H1 (cell line): ENCODE measurements at regions of chr2 and their contacts with region 1.

Region 1: GRCh38 chr2:100262555-100263320 is 59.6 kb downstream of the LONRF2 start:
- DNase-seq: peak in 1 of 2 experiments; percentile 89
- H3K4me3 ChIP-seq: peak overlapping the region in 3 of 4 experiments; percentile 4 to 45 (median 15); a peak in 3 of 8 replicates
- H3K27ac ChIP-seq: no peak overlapping the region
- H3K4me1 ChIP-seq: no peaks in the 10 kb centered on the region; a peak in 1 of 7 replicates
- H3K27me3 ChIP-seq: no peaks in the 10 kb centered on the region
- CTCF ChIP-seq: peak; percentile 86 to 91 (median 89)
- EP300 ChIP-seq: no peak
- POLR2A ChIP-seq: no peak
- RAD21 ChIP-seq: peak; percentile 89 to 91

Region 2: DNA sequence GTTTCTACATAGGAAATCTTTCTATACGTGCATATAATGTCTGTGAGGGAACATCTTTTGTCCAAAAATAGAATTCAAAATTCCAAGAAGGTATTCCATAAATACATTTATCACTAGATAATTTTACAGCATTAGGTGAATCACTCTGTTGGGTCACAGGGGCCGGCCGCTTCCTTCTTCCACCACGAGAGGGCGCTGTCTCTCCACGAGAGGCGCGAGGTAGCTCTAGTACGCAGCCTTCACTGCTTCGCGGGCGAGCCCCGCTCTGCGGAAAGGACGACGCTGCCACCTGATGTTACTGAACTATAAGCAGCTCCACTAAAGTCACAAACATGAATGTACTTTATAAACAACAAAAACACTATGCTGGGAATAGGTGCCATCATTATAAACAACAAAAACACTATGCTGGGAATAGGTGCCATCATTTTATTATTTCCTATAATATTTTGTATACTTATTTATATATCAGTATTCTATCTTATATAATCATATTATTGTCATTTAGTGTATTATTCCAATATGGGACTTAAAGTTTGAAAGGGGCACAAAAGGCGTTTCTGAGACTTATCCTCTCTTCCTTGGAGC is 703.6 kb before region 1 on chr2:
- CTCF ChIA-PET with region 1: interaction called, 29 read pairs
- POLR2A ChIA-PET with region 1: no interaction called
- DNase-seq: peak in 1 of 2 experiments; percentile 97
- H3K4me3 ChIP-seq: no peak overlapping the region
- H3K27ac ChIP-seq: no peak overlapping the region
- H3K4me1 ChIP-seq: peaks cover 2 to 9% (median 7%) of the 10 kb centered on the region in 4 experiments; a peak in 5 of 7 replicates
- H3K27me3 ChIP-seq: no peaks in the 10 kb centered on the region
- CTCF ChIP-seq: peak; percentile 87 to 95 (median 87)
- EP300 ChIP-seq: no peak
- POLR2A ChIP-seq: no peak
- RAD21 ChIP-seq: peak; percentile 99

Region 3: GRCh38 chr2:100242891-100243619 is 19.7 kb before region 1 on chr2:
- CTCF ChIA-PET with region 1: interaction called, 178 read pairs
- POLR2A ChIA-PET with region 1: no interaction called
- DNase-seq: peak in 1 of 2 experiments; percentile 86
- H3K4me3 ChIP-seq: no peak overlapping the region
- H3K27ac ChIP-seq: no peak overlapping the region
- H3K4me1 ChIP-seq: peaks cover 0 to 6% (median 2%) of the 10 kb centered on the region in 4 experiments; a peak in 4 of 7 replicates
- H3K27me3 ChIP-seq: peaks cover 0 to 2% (median under 1%) of the 10 kb centered on the region in 4 experiments; a peak in 2 of 7 replicates
- CTCF ChIP-seq: peak; percentile 92 to 95 (median 93)
- EP300 ChIP-seq: no peak
- POLR2A ChIP-seq: no peak
- RAD21 ChIP-seq: peak; percentile 97

Region 4: DNA sequence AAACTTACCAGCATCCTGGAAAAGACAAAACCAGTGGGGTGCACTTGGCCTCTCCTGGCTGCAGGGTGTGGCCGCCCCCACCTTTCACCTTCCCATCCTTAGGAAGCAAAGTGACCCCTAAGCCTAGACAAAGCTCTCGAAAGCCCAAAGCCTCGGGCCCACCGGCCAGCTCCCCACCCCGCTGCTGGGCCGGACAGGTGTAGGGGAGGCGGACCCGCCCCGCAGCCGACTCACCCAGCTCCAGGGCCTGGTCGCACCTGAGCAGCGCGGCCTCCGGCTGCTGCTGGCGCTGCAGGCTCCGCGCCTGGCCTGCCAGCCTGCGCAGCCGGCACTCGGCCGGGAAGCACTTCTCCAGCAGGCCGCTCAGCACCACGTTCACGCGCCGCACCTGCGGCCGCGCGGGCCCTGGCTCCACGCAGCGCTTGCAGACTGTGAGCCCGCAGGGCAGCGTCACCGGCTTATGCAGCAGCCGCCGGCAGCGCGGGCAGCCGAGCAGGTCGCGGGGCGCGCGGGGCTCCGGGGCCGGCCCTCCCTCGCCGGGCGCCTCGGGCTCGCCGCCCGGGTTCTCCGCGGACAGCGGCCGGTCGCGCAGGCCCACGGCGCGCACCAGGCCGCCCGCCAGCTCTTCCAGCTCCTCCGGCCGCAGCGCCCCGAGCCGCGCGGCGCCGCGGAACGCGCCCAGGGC is 58.6 kb after region 1 on chr2:
- CTCF ChIA-PET with region 1: interaction called, 43 read pairs
- POLR2A ChIA-PET with region 1: no interaction called
- DNase-seq: peak in 1 of 2 experiments; percentile 78
- H3K4me3 ChIP-seq: peak overlapping the region; percentile 33 to 66 (median 48)
- H3K27ac ChIP-seq: no peak overlapping the region
- H3K4me1 ChIP-seq: peaks cover 0 to 3% (median 0%) of the 10 kb centered on the region in 4 experiments; a peak in 2 of 7 replicates
- H3K27me3 ChIP-seq: peaks cover 14 to 46% (median 33%) of the 10 kb centered on the region in 4 experiments
- CTCF ChIP-seq: peak; percentile 31 to 57 (median 53); a peak in 3 of 4 replicates
- EP300 ChIP-seq: no peak
- POLR2A ChIP-seq: no peak
- RAD21 ChIP-seq: peak; percentile 17 to 36; a peak in 2 of 4 replicates

Region 5: DNA sequence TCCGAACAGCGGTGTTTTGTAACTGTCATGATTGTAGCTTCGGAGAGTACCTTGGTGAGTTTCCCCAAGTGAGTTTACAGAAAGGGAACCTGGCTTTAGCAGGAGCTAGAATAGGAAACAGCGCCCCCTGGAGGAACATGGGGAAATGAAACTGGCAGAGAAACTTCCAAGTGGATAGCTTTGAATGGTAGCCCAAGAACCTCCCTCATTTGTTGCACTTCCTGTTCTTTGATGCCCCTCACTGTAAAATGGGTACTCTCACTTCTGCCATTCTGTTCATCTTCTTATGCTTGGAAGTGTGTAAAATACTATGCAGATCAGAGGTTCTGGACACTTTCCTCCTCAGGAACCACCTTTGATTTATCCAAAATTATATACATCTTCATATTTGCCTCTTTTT is 118.5 kb after region 1 on chr2:
- CTCF ChIA-PET with region 1: interaction called, 139 read pairs
- POLR2A ChIA-PET with region 1: interaction called, 3 read pairs
- DNase-seq: peak; percentile 67 to 97
- H3K4me3 ChIP-seq: no peak overlapping the region
- H3K27ac ChIP-seq: no peak overlapping the region
- H3K4me1 ChIP-seq: no peaks in the 10 kb centered on the region
- H3K27me3 ChIP-seq: no peaks in the 10 kb centered on the region
- CTCF ChIP-seq: peak; percentile 28 to 90 (median 87)
- EP300 ChIP-seq: no peak
- POLR2A ChIP-seq: no peak
- RAD21 ChIP-seq: peak; percentile 81 to 87

Region 6: DNA sequence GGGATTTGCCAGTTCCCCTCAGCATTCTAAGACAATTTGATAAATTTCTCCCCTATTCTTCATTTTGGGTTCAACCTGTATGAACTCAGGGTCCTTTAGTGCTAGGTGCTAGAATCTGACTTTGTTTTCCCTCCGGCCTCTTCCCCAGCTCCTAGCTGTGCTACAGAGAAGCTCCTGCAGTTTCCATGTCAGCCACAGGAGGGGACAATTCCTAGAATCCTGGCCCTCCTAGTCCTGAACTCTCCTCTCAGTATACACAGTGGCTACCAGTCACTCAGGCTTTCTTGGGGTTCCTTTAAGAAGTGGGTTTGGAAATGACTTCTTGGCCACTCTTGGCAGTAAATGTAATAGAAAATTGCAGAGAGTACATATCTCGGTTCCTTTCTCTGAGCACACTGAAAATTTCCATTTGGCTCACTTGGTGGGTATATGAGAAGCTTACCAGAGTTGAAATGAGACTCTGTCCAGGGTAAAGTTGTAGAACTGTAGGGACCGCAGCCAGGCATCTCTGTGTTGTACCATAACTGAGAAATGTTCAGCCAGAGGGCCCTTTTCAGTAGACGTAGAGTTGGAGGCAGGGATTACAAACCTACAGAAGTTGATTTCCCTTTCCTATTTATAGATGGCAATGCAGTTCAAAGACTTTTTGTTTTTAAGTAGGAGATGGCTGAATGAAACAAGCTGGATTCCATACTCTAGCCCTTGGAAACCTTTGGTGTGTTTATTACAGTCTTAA is 159.8 kb after region 1 on chr2:
- CTCF ChIA-PET with region 1: interaction called, 18 read pairs
- POLR2A ChIA-PET with region 1: no interaction called
- DNase-seq: no peak
- H3K4me3 ChIP-seq: no peak overlapping the region
- H3K27ac ChIP-seq: no peak overlapping the region
- H3K4me1 ChIP-seq: peaks cover 0 to 4% (median 1%) of the 10 kb centered on the region in 4 experiments; a peak in 2 of 7 replicates
- H3K27me3 ChIP-seq: no peaks in the 10 kb centered on the region
- CTCF ChIP-seq: peak; percentile 54 to 76 (median 76)
- EP300 ChIP-seq: no peak
- POLR2A ChIP-seq: no peak
- RAD21 ChIP-seq: peak; percentile 34 to 71

Region 7: DNA sequence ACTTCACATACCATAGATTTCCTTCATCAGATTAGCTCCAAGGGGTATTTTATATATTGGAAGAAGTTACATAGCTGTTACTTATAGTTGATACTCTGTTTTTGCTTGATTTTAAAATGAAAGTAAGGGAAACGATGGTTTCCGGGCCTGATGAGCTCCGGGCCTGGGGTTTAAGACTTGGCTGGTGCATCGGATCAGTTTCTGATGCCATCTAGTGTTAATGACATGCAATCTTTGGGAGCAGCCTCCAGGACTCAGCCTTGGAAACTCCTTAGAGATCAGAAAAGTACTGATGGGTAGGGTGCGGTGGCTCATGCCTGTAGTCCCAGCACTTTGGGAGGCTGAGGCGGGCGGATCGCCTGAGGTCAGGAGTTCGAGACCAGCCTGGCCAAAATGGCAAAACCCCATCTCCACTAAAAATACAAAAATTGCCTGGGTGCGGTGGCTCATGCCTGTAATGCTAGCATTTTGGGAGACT is 942.8 kb after region 1 on chr2:
- CTCF ChIA-PET with region 1: no interaction called
- POLR2A ChIA-PET with region 1: no interaction called
- DNase-seq: peak; percentile 19 to 52
- H3K4me3 ChIP-seq: no peak overlapping the region
- H3K27ac ChIP-seq: no peak overlapping the region
- H3K4me1 ChIP-seq: no peaks in the 10 kb centered on the region
- H3K27me3 ChIP-seq: no peaks in the 10 kb centered on the region
- CTCF ChIP-seq: peak; percentile 26 to 66 (median 62)
- EP300 ChIP-seq: no peak
- POLR2A ChIP-seq: no peak
- RAD21 ChIP-seq: peak; percentile 69 to 84